Left cardiac atrium (tissue), 4 donors: ENCODE measurements at regions of chr17 and their contacts with region 1.

Region 1: DNA sequence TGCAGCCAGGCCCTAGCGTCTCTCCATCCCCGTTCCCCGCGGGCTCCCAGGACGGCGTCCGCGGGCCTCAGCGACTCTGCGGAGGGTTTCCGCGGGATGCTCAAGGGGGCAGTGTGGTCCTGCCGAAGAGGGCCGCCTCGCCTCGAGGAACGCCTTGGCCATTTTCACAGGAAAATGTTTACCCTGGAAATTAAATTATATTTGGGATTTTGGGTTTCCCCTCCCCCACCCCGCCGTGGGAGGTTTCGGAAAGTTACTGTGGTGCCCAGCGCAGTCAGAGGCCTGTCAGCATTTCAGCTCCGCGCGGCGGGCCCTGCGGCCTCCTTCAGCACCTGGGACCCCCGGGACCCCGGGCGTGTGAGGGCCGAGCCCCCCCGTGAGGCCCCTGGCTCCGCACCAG is 94.5 kb downstream of the PCTP start:
- DNase-seq: peak; percentile 60
- ATAC-seq: peak; percentile 94

Region 2: DNA sequence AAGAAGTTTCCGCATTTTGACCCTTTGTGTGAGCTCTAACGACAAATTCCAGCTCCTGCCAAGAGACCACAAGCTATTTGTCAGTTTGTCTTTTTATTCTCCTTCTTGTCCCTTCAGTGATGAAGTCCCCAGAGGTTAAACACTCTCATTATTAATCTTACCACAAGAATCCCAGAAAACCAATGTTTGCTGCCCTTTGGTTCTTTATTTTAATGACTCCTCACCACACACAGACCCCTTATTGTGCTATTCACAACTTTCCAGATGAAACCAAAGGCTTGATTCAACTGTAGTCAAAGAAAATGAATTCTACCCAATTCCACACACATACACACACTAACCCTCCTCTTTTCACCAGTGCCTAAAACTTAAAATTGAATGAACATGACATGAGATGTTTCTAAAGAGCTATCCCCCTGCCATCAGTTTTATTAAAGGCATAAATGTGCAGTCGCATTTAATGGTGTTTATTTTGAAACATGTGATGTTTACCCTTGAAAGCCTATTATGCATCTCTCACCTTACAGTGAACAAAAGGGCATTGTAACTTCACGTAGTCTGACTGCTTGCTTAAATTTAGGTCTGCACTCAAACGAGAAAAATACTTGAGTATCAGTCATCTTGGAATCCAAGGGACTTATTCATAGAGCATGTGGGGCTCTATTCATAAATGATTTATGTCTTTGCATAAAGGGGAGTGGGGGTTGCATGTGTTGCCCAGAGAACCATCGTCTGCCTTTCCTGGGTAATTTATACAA is 50.5 kb before region 1 on chr17:
- intact Hi-C with region 1: no loop called
- DNase-seq: no peak
- ATAC-seq: no peak

Region 3: GRCh38 chr17:56319517-56319916 is 474.1 kb after region 1 on chr17:
- intact Hi-C with region 1: loop called in 1 of 2 experiments (anchors 10 kb)
- DNase-seq: no peak
- ATAC-seq: peak in 1 of 2 donors; percentile 44